ENCODE measurements at regions of chr14 and their contacts with region 1.

Region 1: DNA sequence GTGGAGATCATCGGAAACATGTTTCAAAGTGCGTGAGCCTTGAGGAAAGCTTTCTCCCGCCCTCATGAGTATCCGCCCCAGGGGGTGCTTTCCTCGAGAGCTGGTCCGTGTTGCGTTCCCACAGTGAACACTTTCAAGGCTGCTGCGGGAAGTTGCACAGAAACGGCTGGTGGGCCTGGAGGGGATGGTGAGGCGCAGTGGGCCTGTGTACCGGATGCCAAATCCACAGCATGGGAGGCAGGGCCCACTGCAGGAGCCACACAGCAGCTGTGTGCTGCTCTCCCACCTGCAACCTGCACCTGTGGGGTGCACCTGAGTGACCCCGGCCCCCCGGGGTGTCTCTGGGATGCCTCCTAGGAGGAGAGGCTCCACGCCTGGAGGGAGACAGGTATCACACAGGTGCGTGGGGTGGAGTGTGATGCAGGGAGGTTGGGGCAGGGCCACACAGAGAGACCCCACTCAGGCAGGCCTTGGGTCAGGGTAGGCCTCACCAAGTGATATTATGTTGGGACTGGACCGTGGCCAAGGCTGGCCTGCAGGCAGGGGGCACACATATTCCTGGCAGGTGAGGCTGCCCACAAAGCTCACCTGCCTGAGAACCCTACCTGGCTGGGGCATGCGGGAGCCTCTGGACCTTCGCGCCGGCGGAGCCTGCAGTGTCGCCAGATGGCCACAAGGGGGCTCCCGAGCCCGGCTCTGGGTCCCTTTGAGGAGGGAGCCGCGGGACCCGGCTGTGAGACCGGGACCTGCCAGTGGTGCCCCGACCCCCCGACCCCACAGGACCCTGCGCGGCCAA is 11.2 kb downstream of the TMEM121 start:
- DNase-seq: peak; percentile 19
- H3K4me3 ChIP-seq: no peak overlapping the region
- H3K27ac ChIP-seq: no peak overlapping the region
- H3K4me1 ChIP-seq: no peaks in the 10 kb centered on the region
- H3K27me3 ChIP-seq: no peaks in the 10 kb centered on the region
- CTCF ChIP-seq: peak; percentile 91 to 95

Region 2: GRCh38 chr14:105430535-105430934 is 107.0 kb before region 1 on chr14:
- CTCF ChIA-PET with region 1: no interaction called
- dilution Hi-C with region 1: loop called (anchors 5 kb)
- in situ Hi-C with region 1: no loop called
- intact Hi-C with region 1: no loop called
- DNase-seq: peak; percentile 69
- H3K4me3 ChIP-seq: no peak overlapping the region
- H3K27ac ChIP-seq: peak overlapping the region; percentile 27
- H3K4me1 ChIP-seq: peaks cover 13% of the 10 kb centered on the region
- H3K27me3 ChIP-seq: no peaks in the 10 kb centered on the region
- CTCF ChIP-seq: no peak

Region 3: GRCh38 chr14:105456736-105457617 is 80.6 kb before region 1 on chr14:
- CTCF ChIA-PET with region 1: no interaction called
- dilution Hi-C with region 1: no loop called
- in situ Hi-C with region 1: no loop called
- intact Hi-C with region 1: no loop called
- DNase-seq: no peak
- H3K4me3 ChIP-seq: no peak overlapping the region
- H3K27ac ChIP-seq: no peak overlapping the region
- H3K4me1 ChIP-seq: no peaks in the 10 kb centered on the region
- H3K27me3 ChIP-seq: no peaks in the 10 kb centered on the region
- CTCF ChIP-seq: no peak

Region 4: DNA sequence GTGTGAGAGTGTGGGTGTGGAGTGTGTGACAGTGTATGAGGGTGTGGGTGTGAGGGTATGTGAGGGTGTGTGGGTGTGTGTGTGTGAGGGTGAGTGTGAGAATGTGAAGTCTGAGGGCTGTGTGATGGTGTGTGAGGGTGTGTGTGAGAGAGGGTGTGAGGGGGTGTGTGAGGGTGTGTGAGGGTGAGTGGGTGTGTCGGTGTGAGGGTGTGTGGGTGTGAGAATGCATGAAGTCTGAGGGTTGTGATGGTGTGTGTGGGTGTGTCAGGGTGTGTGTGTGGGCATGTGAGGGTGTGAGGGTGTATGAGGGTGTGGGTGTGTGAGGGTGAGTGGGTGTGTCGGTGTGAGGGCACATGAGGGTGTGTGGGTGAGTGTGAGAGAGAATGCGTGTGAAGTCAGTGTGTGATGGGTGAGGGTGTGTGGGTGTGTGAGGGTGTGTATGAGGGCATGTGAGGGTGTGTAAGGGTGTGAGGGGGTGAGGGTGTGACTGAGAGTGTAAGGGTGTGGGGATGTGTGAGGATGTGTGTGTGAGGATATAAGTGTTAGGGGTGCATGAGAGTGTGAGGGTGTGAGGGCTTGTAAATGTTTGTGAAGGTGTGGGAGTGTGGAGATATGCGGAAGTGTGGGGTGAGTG is 25.3 kb after region 1 on chr14:
- CTCF ChIA-PET with region 1: no interaction called
- dilution Hi-C with region 1: no loop called
- in situ Hi-C with region 1: no loop called
- intact Hi-C with region 1: no loop called
- DNase-seq: no peak
- H3K4me3 ChIP-seq: no peak overlapping the region
- H3K27ac ChIP-seq: no peak overlapping the region
- H3K4me1 ChIP-seq: no peaks in the 10 kb centered on the region
- H3K27me3 ChIP-seq: no peaks in the 10 kb centered on the region
- CTCF ChIP-seq: no peak

Region 5: DNA sequence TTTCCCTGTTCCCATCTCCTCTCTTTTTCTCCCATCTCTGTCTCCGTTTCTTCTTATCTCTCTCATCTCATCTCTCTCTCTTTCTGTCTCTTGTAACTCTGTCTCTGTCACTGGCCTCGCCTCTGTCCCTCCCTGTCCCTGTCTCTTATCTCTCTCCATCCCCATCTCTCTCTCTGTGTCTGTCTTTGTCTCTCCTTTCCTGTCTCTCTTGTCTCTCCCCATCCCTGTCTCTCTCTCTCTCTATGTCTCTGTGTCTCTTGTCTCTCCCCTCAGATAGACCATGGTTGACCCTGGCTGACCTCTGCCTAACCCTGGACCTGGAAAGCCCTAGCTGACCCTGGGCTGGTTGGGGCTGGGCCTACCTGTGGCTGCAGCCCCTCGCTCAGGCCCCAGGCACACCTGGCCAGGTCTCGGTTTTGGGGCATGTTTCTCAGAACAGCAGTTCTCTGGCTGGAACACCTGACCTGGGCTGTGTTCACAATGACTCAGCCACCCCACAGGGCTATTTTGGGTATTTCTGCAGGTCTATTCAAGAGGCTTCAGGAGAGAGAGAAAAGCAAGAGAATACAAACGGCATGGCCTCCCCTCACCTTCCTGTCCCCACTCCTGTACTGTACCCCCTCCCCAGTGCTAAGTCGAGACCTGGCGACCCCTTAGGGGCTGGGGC is 163.2 kb after region 1 on chr14:
- CTCF ChIA-PET with region 1: no interaction called
- dilution Hi-C with region 1: no loop called
- in situ Hi-C with region 1: no loop called
- intact Hi-C with region 1: no loop called
- DNase-seq: no peak
- H3K4me3 ChIP-seq: no peak overlapping the region
- H3K27ac ChIP-seq: no peak overlapping the region
- H3K4me1 ChIP-seq: no peaks in the 10 kb centered on the region
- H3K27me3 ChIP-seq: no peaks in the 10 kb centered on the region
- CTCF ChIP-seq: no peak

Region 6: DNA sequence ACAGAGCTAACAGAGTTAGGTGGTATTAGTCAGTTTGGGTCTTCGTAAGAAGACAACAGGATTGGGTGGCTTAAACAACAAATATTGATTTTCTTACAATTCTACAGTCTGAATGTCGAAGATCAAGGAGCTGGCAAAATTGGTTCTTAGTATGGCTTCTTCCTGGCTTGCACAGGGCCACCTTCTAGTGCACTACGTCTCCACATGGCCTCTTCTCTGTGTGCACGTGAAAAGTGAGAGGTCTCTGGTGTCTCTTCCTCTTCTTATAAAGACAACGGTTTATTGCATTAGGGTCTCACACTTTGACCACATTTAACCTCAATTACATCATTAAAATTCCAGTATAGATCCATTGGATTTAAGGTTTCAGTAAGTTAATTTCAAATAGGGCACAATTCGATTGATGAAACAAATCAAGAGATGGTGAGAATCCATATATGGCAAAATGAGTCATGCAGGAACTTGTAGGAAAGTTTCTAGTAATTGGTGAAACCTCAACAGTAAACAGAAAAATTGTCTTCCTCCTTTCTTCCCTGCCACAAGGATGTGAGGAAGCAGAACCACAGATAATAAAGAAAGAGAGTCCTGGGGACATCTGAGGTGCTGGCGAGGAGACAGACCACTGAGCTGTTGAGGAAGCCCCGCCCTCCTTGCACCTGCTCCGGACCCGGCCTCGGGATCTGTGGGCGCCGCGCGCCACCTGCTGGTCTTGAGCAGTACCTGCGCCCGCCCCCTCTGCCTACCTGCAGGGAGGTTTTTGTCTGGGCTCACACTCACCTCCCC is 835.5 kb after region 1 on chr14:
- CTCF ChIA-PET with region 1: no interaction called
- dilution Hi-C with region 1: no loop called
- in situ Hi-C with region 1: no loop called
- intact Hi-C with region 1: loop called (anchors 10 kb)
- DNase-seq: no peak
- H3K4me3 ChIP-seq: no peak overlapping the region
- H3K27ac ChIP-seq: no peak overlapping the region
- H3K4me1 ChIP-seq: no peaks in the 10 kb centered on the region
- H3K27me3 ChIP-seq: no peaks in the 10 kb centered on the region
- CTCF ChIP-seq: peak; percentile 35 to 61

Measured in mammary epithelial cell (primary cell).